ENCODE measurements at regions of chr6 and their contacts with region 1.

Region 1: GRCh38 chr6:103367212-103367611 is 1492.5 kb downstream of the HACE1 start:
- DNase-seq: no peak
- ATAC-seq: no peak
- H3K4me3 ChIP-seq: no peak overlapping the region
- H3K27ac ChIP-seq: no peak overlapping the region
- H3K4me1 ChIP-seq: no peaks in the 10 kb centered on the region
- H3K27me3 ChIP-seq: no peaks in the 10 kb centered on the region
- CTCF ChIP-seq: no peak
- EP300 ChIP-seq: no peak
- POLR2A ChIP-seq: no peak
- RAD21 ChIP-seq: no peak

Region 2: DNA sequence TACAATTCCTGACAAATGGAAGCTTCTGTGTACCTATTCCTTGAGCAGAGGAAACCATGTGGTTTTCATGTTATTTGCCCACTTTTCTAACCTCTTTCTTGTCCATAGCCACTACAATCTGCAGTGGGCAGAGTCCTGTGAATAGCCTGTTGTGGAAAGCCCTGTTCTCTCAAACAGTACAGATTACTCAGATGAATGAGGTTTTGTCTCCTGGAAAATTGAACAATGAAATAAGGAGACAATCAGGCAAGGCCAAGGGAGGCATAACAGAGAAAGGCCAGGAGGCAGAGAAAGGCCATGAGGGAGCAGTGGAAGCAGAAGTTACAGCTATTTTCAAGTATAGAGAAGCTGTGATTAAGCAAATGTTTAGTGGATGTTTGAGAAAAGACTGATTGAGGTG is 1784.4 kb before region 1 on chr6:
- CTCF ChIA-PET with region 1: no interaction called
- POLR2A ChIA-PET with region 1: no interaction called
- in situ Hi-C with region 1: no loop called
- intact Hi-C with region 1: no loop called
- DNase-seq: no peak
- ATAC-seq: no peak
- H3K4me3 ChIP-seq: no peak overlapping the region
- H3K27ac ChIP-seq: no peak overlapping the region
- H3K4me1 ChIP-seq: no peaks in the 10 kb centered on the region
- H3K27me3 ChIP-seq: no peaks in the 10 kb centered on the region
- CTCF ChIP-seq: no peak
- EP300 ChIP-seq: no peak
- POLR2A ChIP-seq: no peak
- RAD21 ChIP-seq: no peak

Region 3: GRCh38 chr6:103326760-103327757 is 40.2 kb before region 1 on chr6:
- CTCF ChIA-PET with region 1: no interaction called
- POLR2A ChIA-PET with region 1: no interaction called
- in situ Hi-C with region 1: no loop called
- intact Hi-C with region 1: loop called (anchors 1 kb)
- DNase-seq: no peak
- ATAC-seq: no peak
- H3K4me3 ChIP-seq: no peak overlapping the region
- H3K27ac ChIP-seq: no peak overlapping the region
- H3K4me1 ChIP-seq: no peaks in the 10 kb centered on the region
- H3K27me3 ChIP-seq: no peaks in the 10 kb centered on the region
- CTCF ChIP-seq: no peak
- EP300 ChIP-seq: no peak
- POLR2A ChIP-seq: no peak
- RAD21 ChIP-seq: no peak